Activated naive CD4-positive, alpha-beta T cell treated with anti-CD3 and anti-CD28 coated beads for 36 hours (primary cell): ENCODE measurements at regions of chrX and their contacts with region 1.

Region 1: GRCh38 chrX:151680805-151681204 is 14.5 kb upstream of the PRRG3 start:
- DNase-seq: peak; percentile 74
- H3K4me3 Mint-ChIP-seq: no peak overlapping the region
- H3K27ac Mint-ChIP-seq: no peak overlapping the region
- H3K4me1 Mint-ChIP-seq: no peaks in the 10 kb centered on the region
- H3K27me3 Mint-ChIP-seq: peaks cover 7% of the 10 kb centered on the region

Region 2: DNA sequence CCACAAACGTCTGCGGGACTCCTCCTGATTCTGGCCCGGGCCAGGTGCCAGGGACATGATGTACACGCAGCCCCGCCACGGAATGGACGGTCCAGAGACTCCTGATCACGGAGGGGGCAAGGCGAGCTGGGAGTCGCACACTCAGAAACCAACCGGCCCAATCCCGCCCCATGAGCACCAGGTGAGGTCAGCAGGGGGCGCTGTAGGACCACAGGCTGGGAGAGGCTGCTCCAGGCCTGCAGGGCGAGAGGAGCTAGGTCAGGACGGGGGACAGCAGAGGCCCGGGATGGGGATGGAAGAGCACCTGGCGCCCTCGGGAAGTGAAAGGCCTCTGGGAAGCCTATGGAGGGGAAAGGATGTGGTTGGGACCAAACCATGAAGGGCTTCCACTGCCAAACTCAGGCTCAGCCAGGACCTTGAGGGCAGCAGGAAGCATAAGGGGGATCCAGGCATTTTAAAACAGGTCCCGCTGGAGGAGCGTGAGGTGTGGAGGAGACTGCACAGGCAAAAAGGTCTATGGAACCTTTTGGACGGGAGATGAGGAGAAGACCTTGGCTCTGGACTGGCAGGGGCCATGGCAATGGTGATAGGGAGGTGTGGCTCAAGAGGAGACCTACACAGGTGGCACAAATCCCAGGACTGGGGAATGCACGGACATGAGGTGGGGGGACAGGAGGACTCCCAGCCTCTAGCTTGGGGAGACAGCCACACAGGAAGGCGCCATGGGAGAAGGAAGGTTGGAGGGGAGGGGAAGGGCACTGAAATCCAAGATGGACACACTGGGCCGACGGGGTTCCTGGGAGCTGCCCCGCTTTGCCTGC is 908.4 kb before region 1 on chrX:
- CTCF ChIA-PET with region 1: no interaction called
- intact Hi-C with region 1: loop called (anchors 10 kb)
- DNase-seq: peak; percentile 84
- H3K4me3 Mint-ChIP-seq: no peak overlapping the region
- H3K27ac Mint-ChIP-seq: no peak overlapping the region
- H3K4me1 Mint-ChIP-seq: peaks cover 6% of the 10 kb centered on the region
- H3K27me3 Mint-ChIP-seq: no peaks in the 10 kb centered on the region

Region 3: GRCh38 chrX:151082076-151082948 is 598.5 kb before region 1 on chrX:
- CTCF ChIA-PET with region 1: no interaction called
- intact Hi-C with region 1: loop called (anchors 5 kb)
- DNase-seq: peak; percentile 61
- H3K4me3 Mint-ChIP-seq: no peak overlapping the region
- H3K27ac Mint-ChIP-seq: no peak overlapping the region
- H3K4me1 Mint-ChIP-seq: peaks cover 2% of the 10 kb centered on the region
- H3K27me3 Mint-ChIP-seq: peaks cover 3% of the 10 kb centered on the region

Region 4: GRCh38 chrX:151151665-151152267 is 529.0 kb before region 1 on chrX:
- CTCF ChIA-PET with region 1: interaction called, 11 read pairs
- intact Hi-C with region 1: loop called (anchors 1 kb)
- DNase-seq: peak; percentile 45
- H3K4me3 Mint-ChIP-seq: no peak overlapping the region
- H3K27ac Mint-ChIP-seq: no peak overlapping the region
- H3K4me1 Mint-ChIP-seq: no peaks in the 10 kb centered on the region
- H3K27me3 Mint-ChIP-seq: peaks cover 10% of the 10 kb centered on the region

Region 5: GRCh38 chrX:151505796-151506195 is 175.0 kb before region 1 on chrX:
- CTCF ChIA-PET with region 1: interaction called, 3 read pairs
- intact Hi-C with region 1: loop called (anchors 1 kb)
- DNase-seq: peak; percentile 24
- H3K4me3 Mint-ChIP-seq: no peak overlapping the region
- H3K27ac Mint-ChIP-seq: no peak overlapping the region
- H3K4me1 Mint-ChIP-seq: no peaks in the 10 kb centered on the region
- H3K27me3 Mint-ChIP-seq: peaks cover 14% of the 10 kb centered on the region